Transverse colon (tissue), 4 donors: ENCODE measurements at regions of chr11 and their contacts with region 1.

Region 1: GRCh38 chr11:66082946-66083698 is 13.1 kb downstream of the PACS1 start:
- DNase-seq: no peak
- H3K4me3 ChIP-seq: no peak overlapping the region
- H3K27ac ChIP-seq: no peak overlapping the region
- H3K4me1 ChIP-seq: peaks cover 23 to 54% (median 40%) of the 10 kb centered on the region in 4 donors
- H3K27me3 ChIP-seq: no peaks in the 10 kb centered on the region
- CTCF ChIP-seq: no peak
- EP300 ChIP-seq: no peak
- POLR2A ChIP-seq: no peak

Region 2: DNA sequence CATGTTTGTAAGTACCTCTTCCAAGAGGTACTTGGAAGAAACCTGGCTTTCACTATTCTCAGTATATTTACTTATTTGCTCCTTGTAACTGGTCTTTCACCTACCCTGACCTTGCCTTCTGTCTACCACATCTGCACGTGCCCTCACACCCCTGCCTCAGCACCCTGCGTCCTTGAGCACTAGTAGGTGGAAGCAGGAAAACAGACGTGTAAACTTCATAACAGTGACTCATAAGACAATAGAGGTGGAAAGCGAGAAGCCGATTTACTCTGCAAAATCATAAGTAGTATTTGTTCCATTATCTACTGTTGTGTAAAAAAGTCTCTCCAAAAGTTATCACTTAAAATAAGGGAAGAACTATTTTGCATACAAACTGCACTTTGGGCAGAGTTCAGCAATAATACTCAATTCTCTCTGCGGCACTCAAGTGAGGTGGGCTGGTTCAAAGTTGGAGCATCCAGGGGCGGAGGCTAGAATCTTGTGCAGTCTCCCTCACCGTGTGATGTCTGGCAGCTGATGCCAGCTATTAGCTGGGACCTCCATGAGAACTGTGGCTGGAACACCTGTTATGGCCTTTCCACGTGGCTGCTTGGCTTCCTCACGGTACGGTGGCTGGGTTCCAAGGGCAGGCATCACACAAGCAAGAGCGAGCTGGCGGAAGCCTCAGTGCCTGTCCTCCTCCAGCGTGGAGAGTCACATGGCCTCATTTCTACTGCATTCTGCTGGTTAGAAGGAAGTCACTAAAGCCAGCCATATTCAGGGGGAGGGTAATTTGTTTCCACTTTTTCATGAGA is 17.3 kb after region 1 on chr11:
- in situ Hi-C with region 1: no loop called
- intact Hi-C with region 1: loop called (anchors 1 kb)
- DNase-seq: peak; percentile 64
- H3K4me3 ChIP-seq: peak overlapping the region in 1 of 4 donors; percentile 0
- H3K27ac ChIP-seq: peak overlapping the region in 2 of 4 donors; percentile 11 to 35
- H3K4me1 ChIP-seq: peaks cover 0 to 7% (median 0%) of the 10 kb centered on the region in 4 donors
- H3K27me3 ChIP-seq: no peaks in the 10 kb centered on the region
- CTCF ChIP-seq: no peak
- EP300 ChIP-seq: no peak
- POLR2A ChIP-seq: no peak